ENCODE measurements at regions of chr10 and their contacts with region 1.

Region 1: DNA sequence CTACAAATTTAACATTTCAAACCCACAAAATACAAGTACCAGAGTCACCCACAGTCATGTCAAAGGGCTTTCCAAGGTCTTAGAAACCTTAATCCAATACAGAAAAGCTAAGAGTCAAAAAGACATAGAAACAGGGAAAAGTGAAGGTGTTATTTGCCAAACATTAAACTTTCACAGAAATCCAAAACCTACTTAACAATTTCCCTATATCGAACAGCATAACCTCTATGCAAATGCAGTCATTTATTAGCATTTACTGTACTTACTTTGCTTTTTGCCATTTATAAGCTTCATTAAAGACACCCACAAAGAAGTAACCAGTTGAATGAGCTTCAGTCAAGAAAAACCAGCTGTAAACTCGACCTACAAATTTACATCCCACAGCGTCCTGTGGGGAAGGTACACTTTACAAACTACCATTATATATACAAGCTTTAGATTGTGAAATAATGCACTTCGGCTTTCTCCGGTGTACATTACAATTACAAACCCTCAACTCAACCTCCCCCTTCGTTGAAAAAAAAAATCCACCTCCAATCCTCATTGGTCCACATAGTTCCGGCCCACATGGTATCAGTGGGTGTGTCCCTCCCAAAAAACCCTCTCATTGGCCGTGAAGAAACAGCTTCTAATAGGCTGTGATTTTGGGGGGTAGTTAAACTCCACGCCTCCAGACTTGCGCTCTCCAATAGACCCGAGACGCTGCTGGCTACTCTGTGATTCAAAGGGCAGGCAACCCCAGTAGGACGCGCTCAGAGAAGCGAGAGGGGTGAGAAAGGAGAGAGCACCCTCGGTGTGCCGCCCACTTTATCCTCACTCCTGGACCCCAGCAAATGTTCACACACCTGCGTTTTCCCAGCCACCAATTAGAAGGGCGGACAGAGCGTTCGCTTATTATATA is 1.4 kb downstream of the PANK1 start:
- DNase-seq: peak; percentile 70 to 90 (median 85)
- ATAC-seq: peak; percentile 85 to 93 (median 88)
- H3K4me3 ChIP-seq: peak overlapping the region; percentile 45 to 95 (median 82)
- H3K27ac ChIP-seq: peak overlapping the region; percentile 87 to 99 (median 94)
- H3K4me1 ChIP-seq: peaks cover 0 to 42% (median 16%) of the 10 kb centered on the region in 12 donors
- H3K27me3 ChIP-seq: no peaks in the 10 kb centered on the region
- CTCF ChIP-seq: no peak
- POLR2A ChIP-seq: peak; percentile 98 to 99

Region 2: GRCh38 chr10:89591111-89591795 is 52.4 kb before region 1 on chr10:
- intact Hi-C with region 1: loop called in 6 of 10 experiments (anchors 2 to 5 kb)
- DNase-seq: peak; percentile 25 to 73 (median 51)
- ATAC-seq: peak; percentile 48 to 78 (median 64)
- H3K4me3 ChIP-seq: no peak overlapping the region
- H3K27ac ChIP-seq: peak overlapping the region; percentile 50 to 93 (median 78)
- H3K4me1 ChIP-seq: peaks cover 0 to 58% (median 19%) of the 10 kb centered on the region in 12 donors
- H3K27me3 ChIP-seq: no peaks in the 10 kb centered on the region
- CTCF ChIP-seq: peak in 3 of 12 donors; percentile 14 to 27 (median 16)
- POLR2A ChIP-seq: no peak

Region 3: DNA sequence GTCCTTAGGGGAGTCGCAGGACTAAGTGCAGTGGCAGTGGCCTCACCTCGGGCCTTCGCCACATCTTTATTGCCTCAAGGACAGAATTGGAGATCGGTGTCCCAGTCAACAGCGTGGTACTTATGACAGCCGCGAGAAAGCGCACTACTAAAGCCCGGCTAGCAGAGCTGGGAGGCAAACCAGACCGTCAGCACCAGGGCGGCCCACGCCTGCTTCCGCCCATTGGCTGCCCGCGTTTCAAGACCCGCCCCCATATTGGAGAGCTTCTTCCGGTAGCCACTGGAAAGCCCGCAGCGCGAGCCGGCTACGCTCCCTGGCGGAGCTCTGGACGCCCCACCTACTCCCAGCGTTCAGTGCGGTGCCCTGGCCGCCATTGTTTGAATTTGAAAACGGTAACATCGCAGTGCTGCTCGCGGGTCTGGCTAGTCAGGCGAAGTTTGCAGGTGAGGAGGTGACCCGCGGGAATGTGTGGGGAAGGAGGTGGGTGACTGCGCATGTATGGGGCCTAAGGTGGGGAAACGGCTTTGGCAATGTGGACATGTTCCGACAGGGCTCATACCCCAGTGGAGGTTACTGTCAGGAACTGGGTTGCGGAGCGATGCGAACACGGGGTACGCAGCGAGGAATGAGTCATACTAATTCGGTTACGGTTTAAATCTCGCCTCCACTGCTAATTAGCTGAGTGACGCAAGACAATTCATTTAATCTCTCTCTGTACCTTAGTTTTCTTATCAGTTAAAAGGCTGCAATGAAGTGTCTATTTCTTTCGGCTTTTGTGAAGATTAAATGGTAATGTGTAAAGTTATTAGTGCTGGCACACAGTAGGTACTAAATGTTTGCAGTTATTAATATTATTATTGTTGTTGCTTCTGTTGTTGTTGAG is 57.8 kb after region 1 on chr10 and contains the start of gene KIF20B:
- intact Hi-C with region 1: loop called in 8 of 10 experiments (anchors 1 to 5 kb)
- DNase-seq: peak; percentile 96 to 98 (median 97)
- ATAC-seq: peak; percentile 100
- H3K4me3 ChIP-seq: peak within 1 kb of the TSS; percentile 40 to 85 (median 71)
- H3K27ac ChIP-seq: peak within 1 kb of the TSS; percentile 54 to 90 (median 86)
- H3K4me1 ChIP-seq: peaks cover 0 to 18% (median 6%) of the 10 kb centered on the region in 12 donors
- H3K27me3 ChIP-seq: no peaks in the 10 kb centered on the region
- CTCF ChIP-seq: peak; percentile 36 to 74 (median 57)
- POLR2A ChIP-seq: peak in 1 of 2 donors; percentile 68
- total RNA-seq, gene KIF20B: 0.95 to 8.6 (median 2.4) TPM